ENCODE measurements at regions of chr14 and their contacts with region 1.

Region 1: GRCh38 chr14:60980811-60981632 is at the starts of genes SLC38A6 and TRMT5:
- DNase-seq: peak; percentile 90

Region 2: GRCh38 chr14:60965402-60965801 is 15.6 kb before region 1 on chr14:
- CTCF ChIA-PET with region 1: no interaction called
- POLR2A ChIA-PET with region 1: interaction called, 12 read pairs
- DNase-seq: no peak